MCF 10A (cell line): ENCODE measurements at regions of chr5 and their contacts with region 1.

Region 1: DNA sequence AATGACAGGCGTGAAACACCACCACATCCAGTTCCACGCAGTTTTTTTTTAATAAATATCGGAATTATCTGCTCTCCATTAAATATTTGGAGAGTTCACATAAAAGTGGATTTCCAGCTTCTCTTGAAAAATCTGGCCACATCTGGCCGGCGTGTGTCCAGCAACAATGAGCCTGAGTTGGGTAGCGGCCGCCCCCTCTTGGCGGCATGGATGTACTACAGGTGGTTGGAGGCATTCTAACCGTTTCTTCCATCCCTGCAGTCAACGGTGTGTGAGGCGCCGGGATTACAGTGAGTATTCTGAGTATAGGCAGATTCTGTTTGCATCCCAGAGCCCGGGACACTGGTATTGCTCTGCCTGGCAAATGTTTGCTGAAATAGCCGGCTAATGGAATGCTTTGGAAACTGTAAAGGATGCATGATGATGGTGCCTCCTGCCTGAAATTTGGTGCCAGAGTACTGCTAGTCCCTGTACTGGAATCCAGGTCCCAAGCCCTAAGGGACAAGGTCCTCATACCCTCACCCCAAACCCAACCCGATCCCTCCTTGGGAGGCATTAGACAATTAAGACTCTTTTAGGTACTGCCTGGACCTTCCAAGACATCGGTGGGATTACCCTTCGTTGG is 13.6 kb upstream of the GM2A start:
- DNase-seq: peak; percentile 83
- H3K4me3 Mint-ChIP-seq: no peak overlapping the region
- H3K27ac Mint-ChIP-seq: peak overlapping the region; percentile 20
- H3K4me1 Mint-ChIP-seq: peaks cover 4% of the 10 kb centered on the region
- H3K27me3 Mint-ChIP-seq: no peaks in the 10 kb centered on the region
- CTCF ChIP-seq: peak; percentile 98

Region 2: DNA sequence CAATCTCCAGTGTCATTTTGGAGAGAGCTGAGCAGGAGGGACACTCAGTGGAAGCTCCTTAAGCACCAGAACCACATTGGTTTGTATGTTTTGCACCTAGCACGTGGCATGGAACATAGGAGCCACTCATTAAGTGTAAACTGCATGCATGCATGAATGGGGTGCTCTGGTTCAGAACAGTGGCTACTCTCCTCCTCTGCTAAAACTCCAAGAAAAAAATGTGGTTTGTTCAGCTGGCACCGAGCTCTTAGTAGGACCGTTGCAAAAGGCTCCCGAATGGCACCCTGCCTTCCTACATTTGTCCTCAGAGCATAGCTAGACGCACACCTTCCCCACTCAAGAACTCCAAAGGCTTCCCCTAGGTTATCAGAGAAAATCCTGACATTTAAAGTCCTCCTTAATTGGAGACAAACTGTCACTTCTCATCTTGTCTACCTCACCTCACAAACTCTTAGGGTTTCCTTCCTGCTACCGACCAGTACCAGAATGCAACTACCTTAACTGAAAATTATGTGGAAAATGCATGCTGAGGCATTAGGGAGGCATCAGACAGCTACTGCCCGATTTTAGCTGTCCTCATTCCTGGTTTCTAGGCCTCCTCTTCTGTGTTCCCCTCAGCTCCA is 140.7 kb before region 1 on chr5:
- CTCF ChIA-PET with region 1: interaction called, 10 read pairs
- POLR2A ChIA-PET with region 1: no interaction called
- intact Hi-C with region 1: no loop called
- DNase-seq: no peak
- H3K4me3 Mint-ChIP-seq: no peak overlapping the region
- H3K27ac Mint-ChIP-seq: no peak overlapping the region
- H3K4me1 Mint-ChIP-seq: peaks cover 23% of the 10 kb centered on the region
- H3K27me3 Mint-ChIP-seq: no peaks in the 10 kb centered on the region
- CTCF ChIP-seq: no peak

Region 3: DNA sequence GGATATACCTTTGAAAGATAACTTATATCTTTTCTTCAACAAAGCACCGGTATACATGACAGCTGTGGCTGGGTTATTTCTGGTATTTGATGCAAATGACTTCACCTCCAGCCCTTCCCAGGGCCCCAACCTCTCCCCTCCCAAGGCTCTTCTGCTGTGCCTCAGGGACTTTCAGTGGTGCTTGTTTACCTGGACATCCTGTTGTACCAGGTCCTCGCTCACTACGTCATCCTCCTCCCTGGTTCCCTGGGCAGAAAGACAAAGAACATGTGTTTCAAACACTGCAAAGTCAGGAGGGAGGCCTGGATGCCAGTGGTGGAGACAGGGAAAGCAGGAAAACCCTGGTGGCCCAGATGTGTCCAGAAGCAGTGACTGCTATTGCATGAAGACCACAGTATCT is 105.1 kb before region 1 on chr5:
- CTCF ChIA-PET with region 1: interaction called, 338 read pairs
- POLR2A ChIA-PET with region 1: interaction called, 3 read pairs
- intact Hi-C with region 1: no loop called
- DNase-seq: no peak
- H3K4me3 Mint-ChIP-seq: no peak overlapping the region
- H3K27ac Mint-ChIP-seq: no peak overlapping the region
- H3K4me1 Mint-ChIP-seq: no peaks in the 10 kb centered on the region
- H3K27me3 Mint-ChIP-seq: no peaks in the 10 kb centered on the region
- CTCF ChIP-seq: no peak

Region 4: GRCh38 chr5:151141535-151141934 is 97.8 kb before region 1 on chr5:
- CTCF ChIA-PET with region 1: interaction called, 14 read pairs
- POLR2A ChIA-PET with region 1: no interaction called
- intact Hi-C with region 1: no loop called
- DNase-seq: no peak
- H3K4me3 Mint-ChIP-seq: no peak overlapping the region
- H3K27ac Mint-ChIP-seq: no peak overlapping the region
- H3K4me1 Mint-ChIP-seq: peaks cover 7% of the 10 kb centered on the region
- H3K27me3 Mint-ChIP-seq: no peaks in the 10 kb centered on the region
- CTCF ChIP-seq: no peak

Region 5: GRCh38 chr5:151174612-151175101 is 64.7 kb before region 1 on chr5:
- CTCF ChIA-PET with region 1: interaction called, 16 read pairs
- POLR2A ChIA-PET with region 1: no interaction called
- intact Hi-C with region 1: no loop called
- DNase-seq: no peak
- H3K4me3 Mint-ChIP-seq: no peak overlapping the region
- H3K27ac Mint-ChIP-seq: no peak overlapping the region
- H3K4me1 Mint-ChIP-seq: no peaks in the 10 kb centered on the region
- H3K27me3 Mint-ChIP-seq: no peaks in the 10 kb centered on the region
- CTCF ChIP-seq: no peak

Region 6: GRCh38 chr5:151223469-151224264 is 15.7 kb before region 1 on chr5 and contains the start of gene CCDC69:
- CTCF ChIA-PET with region 1: interaction called, 36 read pairs
- POLR2A ChIA-PET with region 1: interaction called, 22 read pairs
- intact Hi-C with region 1: loop called (anchors 1 kb)
- DNase-seq: peak; percentile 74
- H3K4me3 Mint-ChIP-seq: peak within 1 kb of the TSS; percentile 84
- H3K27ac Mint-ChIP-seq: peak within 1 kb of the TSS; percentile 75
- H3K4me1 Mint-ChIP-seq: peaks cover 18% of the 10 kb centered on the region
- H3K27me3 Mint-ChIP-seq: no peaks in the 10 kb centered on the region
- CTCF ChIP-seq: no peak
- total RNA-seq, gene CCDC69: 2.8 and 3.0 TPM in 2 replicates

Region 7: DNA sequence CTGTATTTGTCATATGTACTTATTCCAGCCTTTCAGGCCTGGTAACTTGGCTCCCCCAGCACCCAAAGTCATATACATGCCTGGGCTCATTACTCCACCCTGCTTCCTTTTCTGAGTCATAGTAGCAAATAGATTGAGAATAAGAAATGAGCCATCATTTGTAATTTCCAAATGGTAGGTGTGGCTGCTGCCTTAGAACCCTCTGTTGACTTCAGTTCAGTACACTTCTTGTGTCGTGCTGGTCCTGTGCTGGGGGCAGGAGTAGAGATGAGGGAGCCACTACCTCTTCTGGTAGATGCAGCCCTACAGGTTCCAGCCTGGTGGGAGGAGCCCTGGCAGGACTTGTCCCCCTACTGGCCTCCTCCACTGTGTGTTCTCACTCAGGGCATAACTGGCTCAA is 24.8 kb after region 1 on chr5:
- CTCF ChIA-PET with region 1: interaction called, 13 read pairs
- POLR2A ChIA-PET with region 1: interaction called, 3 read pairs
- intact Hi-C with region 1: no loop called
- DNase-seq: peak; percentile 79
- H3K4me3 Mint-ChIP-seq: peak overlapping the region; percentile 1
- H3K27ac Mint-ChIP-seq: peak overlapping the region; percentile 91
- H3K4me1 Mint-ChIP-seq: peaks cover 20% of the 10 kb centered on the region
- H3K27me3 Mint-ChIP-seq: no peaks in the 10 kb centered on the region
- CTCF ChIP-seq: no peak